ENCODE measurements at regions of chr5 and their contacts with region 1.

Region 1: GRCh38 chr5:58019614-58020013 is 440.3 kb downstream of the PLK2 start:
- DNase-seq: peak in 3 of 5 donors; percentile 20 to 28 (median 24)
- H3K4me3 ChIP-seq: no peak overlapping the region
- H3K27ac ChIP-seq: no peak overlapping the region
- H3K4me1 ChIP-seq: no peaks in the 10 kb centered on the region
- H3K27me3 ChIP-seq: no peaks in the 10 kb centered on the region
- CTCF ChIP-seq: no peak
- EP300 ChIP-seq: no peak
- POLR2A ChIP-seq: no peak

Region 2: DNA sequence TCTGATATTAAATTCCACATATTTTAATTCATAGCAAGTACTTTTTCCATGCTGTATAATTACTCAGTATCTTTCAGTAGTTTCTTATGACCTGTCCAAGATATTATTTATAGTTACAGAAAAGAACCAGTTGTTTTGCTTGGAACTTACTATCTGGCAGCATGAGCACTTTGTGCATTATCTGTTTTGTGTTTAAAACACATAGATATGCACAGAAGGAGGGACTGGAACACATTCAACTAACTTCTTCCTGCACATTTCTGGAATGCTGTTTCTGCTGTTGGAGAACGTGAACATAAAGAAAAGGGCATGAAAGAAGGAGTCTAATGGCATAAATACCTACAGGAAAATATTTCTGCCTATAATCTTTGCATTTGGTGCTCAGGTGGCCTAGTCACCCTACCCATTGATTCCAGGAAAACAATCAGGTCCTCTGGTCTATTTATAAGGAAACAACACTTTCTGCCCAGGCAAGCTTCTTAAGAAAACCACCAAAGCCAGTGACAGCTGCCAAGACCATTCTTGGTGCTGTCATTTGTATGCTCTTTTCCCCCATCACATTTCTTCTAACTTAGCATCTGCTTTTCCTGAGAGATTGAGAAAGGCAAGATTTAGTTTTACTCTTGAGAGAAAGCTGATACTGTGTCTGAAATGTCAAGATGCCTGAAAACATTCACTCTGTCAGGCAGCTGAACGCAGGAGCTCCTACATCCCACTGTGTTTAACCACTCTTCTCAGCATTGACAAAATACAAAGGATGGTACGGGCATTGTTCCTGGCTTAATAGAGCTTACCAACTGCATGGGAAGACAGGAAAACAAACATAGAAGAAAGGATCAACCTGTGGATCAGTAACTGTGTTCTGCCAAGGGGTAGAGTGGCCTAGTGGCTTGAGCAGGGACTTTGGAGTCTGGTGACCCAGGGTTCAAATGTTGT is 603.6 kb after region 1 on chr5:
- intact Hi-C with region 1: loop called in 1 of 4 experiments (anchors 5 kb)
- DNase-seq: no peak
- H3K4me3 ChIP-seq: no peak overlapping the region
- H3K27ac ChIP-seq: peak overlapping the region in 1 of 2 donors; percentile 29
- H3K4me1 ChIP-seq: peaks cover 3% of the 10 kb centered on the region
- H3K27me3 ChIP-seq: no peaks in the 10 kb centered on the region
- CTCF ChIP-seq: no peak
- EP300 ChIP-seq: no peak
- POLR2A ChIP-seq: no peak

Region 3: GRCh38 chr5:59296317-59297264 is 1277.0 kb after region 1 on chr5:
- intact Hi-C with region 1: no loop called
- DNase-seq: no peak
- H3K4me3 ChIP-seq: peak overlapping the region; percentile 19
- H3K27ac ChIP-seq: no peak overlapping the region
- H3K4me1 ChIP-seq: peaks cover 1% of the 10 kb centered on the region
- H3K27me3 ChIP-seq: no peaks in the 10 kb centered on the region
- CTCF ChIP-seq: no peak
- EP300 ChIP-seq: no peak
- POLR2A ChIP-seq: no peak